Astrocyte of the cerebellum (primary cell): ENCODE measurements at regions of chr1 and their contacts with region 1.

Region 1: DNA sequence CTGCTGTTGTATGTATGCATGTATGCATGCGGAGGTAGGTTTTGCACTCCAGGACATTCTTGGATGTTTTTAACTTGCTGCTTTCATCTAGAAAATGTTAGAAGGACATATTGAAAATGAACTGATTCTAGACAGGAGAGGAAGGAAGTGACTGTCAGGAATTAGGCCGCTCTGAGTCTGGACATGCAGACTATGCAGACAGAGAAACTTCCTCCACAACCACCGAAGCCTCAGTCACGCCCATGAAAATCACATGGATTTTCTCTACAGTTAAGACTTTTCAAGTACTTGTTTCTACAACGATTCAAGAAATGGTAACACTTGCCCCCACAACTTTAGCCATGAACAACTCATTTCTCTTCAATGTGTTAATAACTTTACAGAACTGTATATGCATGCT is 211.1 kb downstream of the SMYD3 start:
- DNase-seq: no peak
- H3K4me3 ChIP-seq: no peak overlapping the region
- CTCF ChIP-seq: no peak

Region 2: DNA sequence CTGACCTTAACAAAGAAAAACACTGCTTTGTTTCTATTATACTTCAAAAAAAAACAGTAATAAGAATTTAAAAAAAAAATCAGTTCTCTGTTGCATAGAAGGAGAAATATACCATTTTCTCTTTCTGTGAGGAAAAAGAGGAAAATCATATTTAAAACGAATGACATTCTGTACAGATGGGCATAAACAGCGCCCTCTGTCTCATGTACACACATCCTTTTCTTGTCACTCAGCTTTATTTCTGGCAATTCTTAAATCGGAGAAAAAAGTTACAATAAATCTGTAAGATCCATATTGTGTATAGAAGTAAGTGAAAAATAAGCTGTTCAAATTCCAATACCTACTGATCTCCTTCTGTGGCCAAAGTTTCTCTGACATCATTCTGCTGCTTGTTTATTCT is 34.3 kb before region 1 on chr1:
- in situ Hi-C with region 1: no loop called
- DNase-seq: no peak
- H3K4me3 ChIP-seq: no peak overlapping the region
- CTCF ChIP-seq: peak; percentile 12

Region 3: GRCh38 chr1:246351721-246352120 is 55.8 kb after region 1 on chr1:
- in situ Hi-C with region 1: loop called (anchors 5 kb)
- DNase-seq: no peak
- H3K4me3 ChIP-seq: no peak overlapping the region
- CTCF ChIP-seq: no peak